HepG2 (cell line): ENCODE measurements at regions of chr18 and their contacts with region 1.

Region 1: DNA sequence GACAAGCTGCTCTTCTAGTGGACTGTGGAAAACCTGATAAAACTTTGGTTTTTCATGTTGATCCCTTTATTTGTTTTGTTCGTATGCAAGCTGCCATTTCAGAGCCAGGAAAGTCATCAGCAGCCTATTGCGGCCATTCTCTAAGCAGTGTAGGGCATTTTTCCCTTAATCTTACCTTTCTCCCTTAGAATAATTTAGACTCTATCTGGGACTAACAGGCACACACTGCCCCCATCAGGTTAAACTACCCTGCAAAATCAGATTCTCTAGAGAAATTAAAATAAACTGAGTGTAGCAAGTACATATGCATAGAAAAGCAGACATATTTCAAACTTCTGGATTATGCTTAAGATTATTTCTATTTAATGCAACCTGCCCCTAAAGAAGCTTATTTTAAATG is 347.5 kb downstream of the METTL4 start:
- DNase-seq: peak; percentile 11
- ATAC-seq: peak; percentile 52
- H3K4me3 ChIP-seq: no peak overlapping the region
- H3K27ac ChIP-seq: no peak overlapping the region
- H3K4me1 ChIP-seq: no peaks in the 10 kb centered on the region
- H3K27me3 ChIP-seq: no peaks in the 10 kb centered on the region; a peak in 1 of 5 replicates
- CTCF ChIP-seq: peak; percentile 54
- EP300 ChIP-seq: no peak
- POLR2A ChIP-seq: no peak
- RAD21 ChIP-seq: no peak

Region 2: GRCh38 chr18:1929720-1930119 is 294.1 kb before region 1 on chr18:
- CTCF ChIA-PET with region 1: no interaction called
- POLR2A ChIA-PET with region 1: no interaction called
- in situ Hi-C with region 1: no loop called
- intact Hi-C with region 1: loop called (anchors 10 kb)
- DNase-seq: no peak
- ATAC-seq: no peak
- H3K4me3 ChIP-seq: no peak overlapping the region
- H3K27ac ChIP-seq: no peak overlapping the region
- H3K4me1 ChIP-seq: no peaks in the 10 kb centered on the region
- H3K27me3 ChIP-seq: no peaks in the 10 kb centered on the region
- CTCF ChIP-seq: no peak
- EP300 ChIP-seq: no peak
- POLR2A ChIP-seq: no peak
- RAD21 ChIP-seq: no peak

Region 3: DNA sequence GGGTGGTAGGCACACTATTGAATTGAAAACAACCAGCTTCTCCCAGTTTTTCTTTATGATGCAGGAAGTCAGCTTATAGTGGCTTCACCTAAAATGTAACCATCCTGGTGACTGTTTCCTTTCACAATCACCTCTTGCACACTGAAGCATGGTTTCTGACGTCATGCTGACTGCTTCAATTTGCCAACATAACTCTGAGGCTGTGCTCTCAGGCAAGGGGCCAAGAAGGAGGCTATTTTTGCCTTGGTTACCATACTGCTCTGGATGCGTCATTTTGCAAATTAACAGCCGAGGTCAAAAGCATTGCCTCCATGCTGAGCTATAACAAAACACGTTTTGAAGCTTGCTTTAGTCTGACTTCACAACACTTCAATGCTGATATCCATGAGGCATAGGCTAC is 50.4 kb before region 1 on chr18:
- CTCF ChIA-PET with region 1: no interaction called
- POLR2A ChIA-PET with region 1: no interaction called
- in situ Hi-C with region 1: no loop called
- intact Hi-C with region 1: no loop called
- DNase-seq: no peak
- ATAC-seq: no peak
- H3K4me3 ChIP-seq: no peak overlapping the region
- H3K27ac ChIP-seq: no peak overlapping the region
- H3K4me1 ChIP-seq: peaks cover 37% of the 10 kb centered on the region
- H3K27me3 ChIP-seq: no peaks in the 10 kb centered on the region; a peak in 1 of 5 replicates
- CTCF ChIP-seq: no peak
- EP300 ChIP-seq: no peak
- POLR2A ChIP-seq: no peak
- RAD21 ChIP-seq: no peak

Region 4: GRCh38 chr18:2776601-2777000 is 552.8 kb after region 1 on chr18:
- CTCF ChIA-PET with region 1: no interaction called
- POLR2A ChIA-PET with region 1: no interaction called
- in situ Hi-C with region 1: no loop called
- intact Hi-C with region 1: no loop called
- DNase-seq: no peak
- ATAC-seq: no peak
- H3K4me3 ChIP-seq: no peak overlapping the region
- H3K27ac ChIP-seq: no peak overlapping the region
- H3K4me1 ChIP-seq: no peaks in the 10 kb centered on the region
- H3K27me3 ChIP-seq: no peaks in the 10 kb centered on the region
- CTCF ChIP-seq: no peak
- EP300 ChIP-seq: no peak
- POLR2A ChIP-seq: no peak
- RAD21 ChIP-seq: no peak